Right ventricle myocardium inferior (tissue), 1 donor: ENCODE measurements at regions of chrX and their contacts with region 1.

Region 1: DNA sequence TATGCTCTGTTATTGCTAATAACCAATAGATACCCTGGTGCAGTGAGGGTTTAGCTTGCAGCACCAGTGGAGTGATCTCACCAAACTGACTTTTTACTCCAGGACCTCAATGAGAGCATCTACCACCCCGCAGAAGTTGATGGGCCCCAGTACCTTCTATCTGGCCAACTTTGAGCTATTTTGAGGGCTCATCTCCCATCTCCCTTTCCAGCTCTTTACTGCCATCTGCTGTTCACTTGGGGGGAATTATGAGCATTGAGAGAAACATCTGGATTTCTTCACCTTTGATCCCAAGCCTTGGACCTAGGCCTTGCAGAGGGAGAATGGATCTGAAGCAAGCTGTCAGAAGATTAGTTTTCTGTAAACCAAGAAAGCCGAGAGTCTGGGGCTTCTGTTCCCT is 143.6 kb downstream of the TMEM164 start:
- DNase-seq: no peak
- ATAC-seq: peak; percentile 73

Region 2: GRCh38 chrX:109714340-109714958 is 432.1 kb before region 1 on chrX:
- intact Hi-C with region 1: loop called (anchors 10 kb)
- DNase-seq: no peak
- ATAC-seq: no peak

Region 3: DNA sequence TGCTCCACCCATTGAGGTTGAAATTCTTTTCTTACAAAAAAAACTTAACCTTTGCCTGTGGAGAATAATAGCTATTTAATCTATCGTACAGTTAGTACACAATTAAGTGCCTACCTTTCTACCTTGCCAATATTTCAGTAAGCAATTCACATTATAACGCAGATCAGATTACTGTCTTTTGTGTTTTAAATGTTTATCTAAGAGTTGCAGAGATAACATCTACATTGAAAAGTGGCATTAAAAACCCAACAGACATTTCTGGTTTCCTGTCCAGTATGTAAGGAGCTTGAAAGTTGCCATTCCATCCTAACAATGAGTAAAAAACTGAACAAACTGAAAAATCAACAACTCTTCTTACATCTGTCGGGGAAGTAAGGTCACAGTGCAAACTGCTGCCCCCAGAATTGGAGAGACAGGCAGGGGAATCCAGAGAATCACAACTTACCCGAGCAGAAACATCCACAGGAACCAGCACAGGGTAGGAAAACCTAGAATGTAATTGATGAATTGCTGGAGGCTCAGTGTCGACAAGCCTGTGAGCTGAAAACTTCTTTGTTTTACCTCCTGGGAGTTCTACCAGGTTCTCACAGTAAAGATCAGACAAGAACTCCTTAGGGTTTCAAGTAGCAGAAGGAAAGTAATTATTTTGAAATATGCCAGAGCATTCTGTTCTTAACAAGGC is 386.1 kb before region 1 on chrX:
- intact Hi-C with region 1: no loop called
- DNase-seq: no peak
- ATAC-seq: no peak

Region 4: GRCh38 chrX:109911046-109911445 is 235.5 kb before region 1 on chrX:
- intact Hi-C with region 1: loop called (anchors 5 kb)
- DNase-seq: no peak
- ATAC-seq: no peak

Region 5: DNA sequence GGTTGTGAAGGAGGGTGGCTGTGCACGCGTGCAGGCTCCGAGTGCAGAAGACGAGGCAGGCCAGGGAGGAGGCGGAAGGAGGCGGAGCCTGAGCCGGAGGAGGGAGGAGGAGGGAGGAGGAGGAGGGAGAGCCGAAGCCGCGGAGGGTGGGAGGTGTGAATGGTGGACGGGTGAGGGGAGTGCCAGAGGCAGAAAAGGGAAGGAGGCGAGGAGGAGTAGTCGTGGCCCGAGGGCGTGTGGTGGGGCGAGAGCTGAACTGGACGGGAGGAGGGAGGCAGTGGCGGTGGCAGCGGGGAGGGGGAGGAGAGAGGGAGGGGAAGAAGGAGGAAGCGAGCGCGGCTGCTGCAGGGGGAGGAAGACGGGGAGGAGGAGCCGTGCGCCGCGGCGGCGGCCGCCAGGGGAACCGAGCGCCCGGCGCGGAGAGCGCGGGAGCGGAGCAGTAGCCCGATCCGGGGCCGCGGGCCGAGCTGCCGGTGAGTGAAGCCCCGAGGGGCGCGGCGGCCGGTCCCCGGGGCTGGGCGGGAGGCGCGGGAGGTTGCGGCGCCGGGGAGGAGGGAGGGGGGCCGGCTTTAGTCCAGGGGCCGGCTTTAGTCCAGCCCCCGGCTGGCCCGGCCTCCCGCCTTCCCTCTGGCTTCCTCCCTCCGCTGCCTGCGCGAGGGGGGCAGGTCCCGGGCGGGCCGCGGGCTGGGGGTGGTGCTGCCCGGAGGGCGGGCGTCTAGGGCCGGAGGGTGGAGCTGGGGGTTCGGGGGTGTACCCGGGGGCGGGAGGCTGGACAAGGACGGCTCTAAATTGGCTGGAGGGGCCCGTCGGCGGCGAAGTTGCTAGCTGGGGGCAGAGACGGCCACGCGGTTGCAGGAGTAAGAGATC is 144.0 kb before region 1 on chrX and contains the start of gene TMEM164:
- intact Hi-C with region 1: loop called (anchors 10 kb)
- DNase-seq: peak; percentile 93
- ATAC-seq: peak; percentile 95
- total RNA-seq, gene TMEM164: 53.6 TPM

Region 6: GRCh38 chrX:110046001-110046400 is 100.5 kb before region 1 on chrX:
- intact Hi-C with region 1: loop called (anchors 5 kb)
- DNase-seq: no peak
- ATAC-seq: peak; percentile 43